ENCODE measurements at regions of chr1 and their contacts with region 1.

Region 1: DNA sequence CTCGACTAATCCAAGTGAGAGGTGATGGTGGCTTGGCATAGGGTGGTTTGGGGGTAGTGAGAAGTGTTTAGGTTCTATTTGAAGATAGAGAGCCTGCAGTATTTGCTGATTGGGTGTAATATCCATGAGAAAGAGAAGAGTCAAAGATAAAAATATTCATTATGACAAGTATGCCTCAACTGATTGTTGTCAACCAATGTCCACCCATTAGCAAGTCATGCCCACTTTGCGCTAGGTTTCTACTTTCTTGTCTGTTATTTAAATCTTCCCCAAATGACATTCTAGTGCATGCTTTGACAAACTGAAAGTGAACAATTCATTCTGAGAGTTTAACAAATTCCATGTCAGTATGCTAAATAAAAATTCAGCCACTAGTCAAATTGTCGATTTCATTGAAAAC is 3.8 kb upstream of the XCL1 start:
- DNase-seq: no peak
- ATAC-seq: no peak

Region 2: GRCh38 chr1:168342572-168343280 is 229.9 kb before region 1 on chr1:
- intact Hi-C with region 1: loop called (anchors 2 to 10 kb)
- DNase-seq: peak; percentile 87
- ATAC-seq: peak; percentile 99

Region 3: DNA sequence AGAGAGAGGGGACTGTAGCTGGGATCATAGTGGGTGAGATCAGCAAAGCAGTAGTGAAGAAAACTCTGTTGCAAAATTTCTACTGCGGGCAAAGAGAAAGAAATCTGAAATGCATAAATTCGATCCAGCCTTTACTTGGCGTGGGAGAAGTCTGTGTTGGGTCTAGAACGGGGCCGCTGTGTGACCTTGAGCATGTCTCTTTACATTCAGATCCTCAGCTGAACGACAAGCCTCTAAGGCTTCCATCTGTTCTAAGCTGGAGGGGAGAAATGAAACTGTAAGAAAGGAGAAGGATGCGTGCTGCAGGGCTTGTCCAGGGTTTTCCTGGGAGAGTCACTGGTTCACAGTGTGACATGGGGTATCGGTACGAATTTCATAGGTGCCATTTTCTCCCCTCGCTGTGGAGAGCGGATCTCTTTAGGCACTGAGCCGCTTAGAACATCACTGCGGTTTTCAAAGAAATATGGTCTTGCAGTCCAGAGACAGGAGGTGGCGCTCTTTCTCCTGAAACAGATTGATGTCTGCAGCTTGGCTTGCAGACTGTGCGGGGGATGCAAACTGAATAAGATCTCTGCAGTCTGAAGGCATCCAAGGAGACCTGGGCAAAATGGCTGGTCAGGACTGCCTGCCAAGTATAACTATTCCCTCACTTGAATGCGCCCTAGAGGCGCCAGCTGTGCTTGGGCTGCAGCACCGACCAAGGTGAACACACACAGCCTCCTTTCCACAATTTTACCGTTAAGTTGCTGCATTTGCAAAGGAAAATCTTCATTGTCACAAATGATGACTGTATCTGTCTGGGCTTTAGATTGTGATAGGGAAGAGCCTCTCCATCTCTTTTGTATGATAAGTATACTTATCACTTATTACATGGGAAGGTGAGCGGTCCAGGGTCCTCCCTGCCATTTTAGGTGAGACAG is 132.9 kb before region 1 on chr1:
- intact Hi-C with region 1: loop called (anchors 5 to 10 kb)
- DNase-seq: peak; percentile 71
- ATAC-seq: peak; percentile 91 to 93

Measured in left cardiac atrium (tissue), 4 donors.